Activated T-helper 2 cell treated with anti-CD3 and anti-CD28 coated beads, Interferon-gamma antibody, Interleukin-2, Interleukin-4, amounts not matched to agents 10 μg/mL and 5 μg/mL and 100 μg/mL, durations not matched to agents 14 hours and 24 hours and 36 hours (primary cell): ENCODE measurements at regions of chr3 and their contacts with region 1.

Region 1: GRCh38 chr3:194671900-194672808 is at the start of gene LSG1:
- DNase-seq: peak; percentile 83
- H3K4me3 Mint-ChIP-seq: peak within 1 kb of the TSS; percentile 99
- H3K27ac Mint-ChIP-seq: peak within 1 kb of the TSS; percentile 96
- H3K4me1 Mint-ChIP-seq: peaks cover 44% of the 10 kb centered on the region
- H3K27me3 Mint-ChIP-seq: peaks cover 2% of the 10 kb centered on the region
- total RNA-seq, gene LSG1: 52.8 and 53.6 TPM in 2 replicates

Region 2: DNA sequence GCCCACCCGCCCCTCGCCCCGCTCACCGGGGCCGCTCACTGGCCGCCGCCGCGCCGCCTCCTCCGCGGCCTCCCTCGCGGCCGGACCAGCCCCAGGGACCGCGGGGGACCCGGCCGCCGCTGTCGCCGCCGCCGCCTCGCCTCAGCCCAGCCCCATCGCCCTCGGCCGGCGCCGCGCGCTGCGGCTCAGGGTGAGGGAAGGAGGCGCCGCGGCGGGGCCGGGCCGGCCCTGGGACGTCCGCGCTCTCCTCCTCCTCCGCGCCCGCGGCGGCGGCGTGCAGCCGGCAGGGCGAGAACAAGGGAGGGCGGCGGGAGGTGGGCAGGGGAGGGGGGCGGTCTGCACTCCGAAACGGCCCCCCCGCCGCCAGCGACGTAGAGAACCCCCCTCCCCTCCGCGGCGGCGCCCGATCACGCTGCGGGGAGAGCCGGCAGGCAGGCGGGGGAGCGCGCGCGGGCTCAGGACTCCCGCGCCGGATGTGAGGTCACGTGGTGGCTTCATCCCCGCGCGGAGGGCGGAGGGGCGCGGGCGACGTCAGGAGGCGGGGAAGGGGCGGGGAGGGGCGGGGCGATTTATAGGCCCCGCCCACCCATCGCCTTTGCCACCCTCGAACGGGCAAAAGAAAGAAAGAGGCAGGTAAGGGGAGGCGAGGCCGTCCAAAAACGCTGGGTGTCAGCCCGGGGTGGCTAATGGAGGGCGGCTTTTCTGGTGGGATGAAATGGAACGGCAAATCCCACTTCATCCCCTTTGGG is 185.4 kb before region 1 on chr3 and contains the start of gene ATP13A3:
- intact Hi-C with region 1: loop called (anchors 5 kb)
- DNase-seq: peak; percentile 87
- H3K4me3 Mint-ChIP-seq: peak within 1 kb of the TSS; percentile 89
- H3K27ac Mint-ChIP-seq: peak within 1 kb of the TSS; percentile 89
- H3K4me1 Mint-ChIP-seq: peaks cover 51% of the 10 kb centered on the region
- H3K27me3 Mint-ChIP-seq: no peaks in the 10 kb centered on the region
- total RNA-seq, gene ATP13A3: 136 and 150 TPM in 2 replicates

Region 3: DNA sequence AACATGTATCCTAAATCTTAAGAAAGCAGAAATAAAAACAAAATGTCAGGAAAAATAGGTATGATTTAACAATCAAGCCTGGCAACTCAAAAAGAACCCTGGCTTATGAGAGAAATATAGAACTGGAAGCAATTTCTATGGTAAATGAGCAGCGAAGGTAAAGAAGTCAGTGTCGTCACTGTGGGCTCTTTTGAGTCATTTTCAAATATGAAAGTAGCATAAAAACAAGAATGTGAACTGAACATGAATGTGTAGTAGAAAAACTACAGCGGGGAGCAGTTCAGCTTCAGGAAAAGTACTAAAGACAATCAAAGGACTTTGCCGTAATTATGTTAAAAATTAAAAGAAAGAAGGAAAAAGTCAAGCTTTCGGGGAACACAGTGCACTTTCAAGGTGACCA is 17.7 kb before region 1 on chr3:
- intact Hi-C with region 1: loop called (anchors 1 kb)
- DNase-seq: no peak
- H3K4me3 Mint-ChIP-seq: peak overlapping the region; percentile 67
- H3K27ac Mint-ChIP-seq: peak overlapping the region; percentile 97
- H3K4me1 Mint-ChIP-seq: peaks cover 35% of the 10 kb centered on the region
- H3K27me3 Mint-ChIP-seq: no peaks in the 10 kb centered on the region

Region 4: DNA sequence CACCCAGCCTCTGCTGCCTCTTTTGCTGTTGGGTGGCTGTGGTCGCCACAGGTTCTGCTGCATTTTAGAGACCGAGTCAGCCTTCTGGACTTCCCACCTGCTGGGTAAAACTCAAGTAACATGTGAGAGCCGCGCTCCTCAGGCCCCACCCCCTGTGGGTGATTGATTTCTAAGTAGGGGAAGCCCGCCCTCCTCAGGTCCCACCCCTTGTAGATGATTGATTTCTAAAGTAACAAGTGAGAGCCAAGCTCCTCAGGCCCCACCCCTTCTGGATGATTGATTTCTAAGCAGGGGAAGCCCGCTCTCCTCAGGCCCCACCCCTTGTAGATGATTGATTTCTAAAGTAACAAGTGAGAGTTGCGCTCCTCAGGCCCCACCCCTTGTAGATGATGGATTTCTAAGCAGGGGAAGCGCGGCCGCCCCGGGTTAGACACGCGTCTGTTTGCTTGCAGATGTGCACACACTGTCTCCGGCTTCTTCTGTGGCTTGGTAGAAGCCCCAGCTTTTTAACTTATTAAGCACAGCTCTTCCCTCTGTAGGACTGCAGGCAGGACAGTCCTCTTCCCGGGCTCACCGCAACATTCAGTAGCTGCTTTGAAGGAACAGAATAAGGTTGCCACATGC is 97.0 kb after region 1 on chr3:
- intact Hi-C with region 1: loop called (anchors 2 kb)
- DNase-seq: peak; percentile 85
- H3K4me3 Mint-ChIP-seq: peak overlapping the region; percentile 77
- H3K27ac Mint-ChIP-seq: peak overlapping the region; percentile 43
- H3K4me1 Mint-ChIP-seq: peaks cover 11% of the 10 kb centered on the region
- H3K27me3 Mint-ChIP-seq: peaks cover 31% of the 10 kb centered on the region

Region 5: DNA sequence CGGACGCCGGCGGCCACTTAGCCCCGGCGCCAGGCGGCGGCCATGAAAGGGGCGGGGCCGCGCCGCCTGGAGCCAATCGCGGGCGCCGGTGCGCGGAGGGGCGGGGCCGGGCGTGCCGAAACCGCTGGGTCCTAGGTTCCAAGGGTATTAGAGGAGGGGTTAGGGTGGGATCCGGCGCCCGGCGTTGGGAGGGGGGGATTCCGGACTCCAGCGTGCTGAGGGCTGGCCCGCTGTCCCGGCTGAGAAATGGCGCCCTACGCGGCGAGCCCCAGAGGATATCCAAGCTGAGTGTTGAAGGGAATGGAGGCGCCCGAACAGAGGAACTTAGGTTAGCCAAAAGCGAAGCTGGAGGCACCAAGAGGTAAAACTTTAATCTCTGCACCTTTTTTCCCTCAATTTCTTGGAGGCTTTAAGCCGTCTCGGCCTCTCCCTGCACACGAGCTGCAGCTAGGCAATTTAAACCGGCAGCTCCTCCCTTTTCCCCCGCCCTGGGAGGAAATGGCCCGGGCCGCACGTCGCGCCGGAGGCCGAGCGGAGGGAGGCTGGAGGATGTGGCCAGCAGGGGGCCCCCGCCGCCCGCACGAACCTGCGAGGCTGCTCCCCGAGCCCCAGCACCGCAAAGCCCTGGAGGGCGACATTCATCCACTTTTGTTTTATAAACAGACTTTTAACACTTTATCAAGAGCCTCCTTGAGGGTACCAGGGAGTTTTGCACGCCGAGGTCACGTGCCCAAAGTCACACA is 599.1 kb after region 1 on chr3 and contains the start of gene XXYLT1:
- intact Hi-C with region 1: loop called (anchors 5 kb)
- DNase-seq: peak; percentile 86
- H3K4me3 Mint-ChIP-seq: peak within 1 kb of the TSS; percentile 86
- H3K27ac Mint-ChIP-seq: peak within 1 kb of the TSS; percentile 84
- H3K4me1 Mint-ChIP-seq: peaks cover 23% of the 10 kb centered on the region
- H3K27me3 Mint-ChIP-seq: no peaks in the 10 kb centered on the region
- total RNA-seq, gene XXYLT1: 15.8 and 16.1 TPM in 2 replicates